ENCODE measurements at regions of chr19 and their contacts with region 1.

Region 1: GRCh38 chr19:662962-663681 is at the start of gene RNF126:
- DNase-seq: peak; percentile 87 to 97 (median 93)
- H3K4me3 ChIP-seq: peak within 1 kb of the TSS; percentile 86
- H3K27ac ChIP-seq: peak within 1 kb of the TSS; percentile 69 to 84
- H3K4me1 ChIP-seq: peaks cover 26% of the 10 kb centered on the region
- H3K27me3 ChIP-seq: no peaks in the 10 kb centered on the region
- CTCF ChIP-seq: no peak
- EP300 ChIP-seq: no peak
- POLR2A ChIP-seq: peak; percentile 41
- total RNA-seq, gene RNF126: 26.6 to 52.2 (median 34.5) TPM

Region 2: DNA sequence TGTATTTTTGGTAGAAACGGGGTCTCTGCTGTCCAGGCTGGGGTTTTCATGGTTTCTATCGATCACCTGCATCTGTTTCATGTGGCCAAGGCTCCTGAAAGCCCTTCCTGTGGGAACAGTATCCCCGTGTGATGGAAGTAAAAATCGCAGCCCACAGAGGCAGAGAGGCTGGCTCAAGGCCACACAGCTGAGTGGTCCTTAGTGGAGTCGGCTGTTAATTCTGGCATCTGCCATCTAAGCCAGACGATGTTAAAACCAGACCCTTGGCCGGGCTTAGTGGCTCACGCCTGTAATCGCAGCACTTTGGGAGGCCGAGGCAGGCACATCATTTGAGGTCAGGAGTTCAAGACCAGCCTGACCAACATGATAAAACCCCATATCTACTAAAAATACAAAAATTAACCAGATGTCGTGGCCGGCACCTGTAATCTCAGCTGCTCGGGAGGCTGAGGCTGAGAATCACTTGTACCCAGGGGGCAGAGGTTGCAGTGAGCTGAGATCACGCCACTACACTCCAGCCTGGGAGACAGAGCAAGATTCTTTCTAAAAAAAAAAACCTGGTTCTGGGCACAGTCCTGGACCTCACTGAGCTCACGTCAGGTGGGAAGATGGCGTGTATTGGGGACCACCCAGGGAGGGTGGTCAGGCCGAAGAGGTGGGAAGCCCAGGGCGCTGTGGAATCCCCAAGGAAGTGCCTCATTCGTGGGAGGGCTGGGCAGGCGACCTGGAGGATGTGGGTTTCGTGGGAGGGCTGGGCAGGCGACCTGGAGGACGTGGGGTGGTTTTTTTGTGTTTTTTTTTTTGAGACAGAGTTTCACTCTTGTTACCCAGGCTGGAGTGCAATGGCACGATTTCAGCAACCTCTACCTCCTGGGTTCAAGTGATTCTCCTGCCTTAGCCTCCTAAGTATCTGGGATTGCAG is 69.3 kb after region 1 on chr19:
- intact Hi-C with region 1: loop called (anchors 2 to 5 kb)
- DNase-seq: no peak
- H3K4me3 ChIP-seq: no peak overlapping the region
- H3K27ac ChIP-seq: no peak overlapping the region
- H3K4me1 ChIP-seq: no peaks in the 10 kb centered on the region
- H3K27me3 ChIP-seq: no peaks in the 10 kb centered on the region
- CTCF ChIP-seq: no peak
- EP300 ChIP-seq: no peak
- POLR2A ChIP-seq: no peak

Region 3: GRCh38 chr19:737581-738093 is 74.5 kb after region 1 on chr19:
- intact Hi-C with region 1: loop called (anchors 2 to 5 kb)
- DNase-seq: peak in 4 of 5 donors; percentile 34 to 74 (median 56)
- H3K4me3 ChIP-seq: no peak overlapping the region
- H3K27ac ChIP-seq: no peak overlapping the region
- H3K4me1 ChIP-seq: no peaks in the 10 kb centered on the region
- H3K27me3 ChIP-seq: no peaks in the 10 kb centered on the region
- CTCF ChIP-seq: peak in 1 of 3 donors; percentile 17
- EP300 ChIP-seq: no peak
- POLR2A ChIP-seq: no peak

Region 4: DNA sequence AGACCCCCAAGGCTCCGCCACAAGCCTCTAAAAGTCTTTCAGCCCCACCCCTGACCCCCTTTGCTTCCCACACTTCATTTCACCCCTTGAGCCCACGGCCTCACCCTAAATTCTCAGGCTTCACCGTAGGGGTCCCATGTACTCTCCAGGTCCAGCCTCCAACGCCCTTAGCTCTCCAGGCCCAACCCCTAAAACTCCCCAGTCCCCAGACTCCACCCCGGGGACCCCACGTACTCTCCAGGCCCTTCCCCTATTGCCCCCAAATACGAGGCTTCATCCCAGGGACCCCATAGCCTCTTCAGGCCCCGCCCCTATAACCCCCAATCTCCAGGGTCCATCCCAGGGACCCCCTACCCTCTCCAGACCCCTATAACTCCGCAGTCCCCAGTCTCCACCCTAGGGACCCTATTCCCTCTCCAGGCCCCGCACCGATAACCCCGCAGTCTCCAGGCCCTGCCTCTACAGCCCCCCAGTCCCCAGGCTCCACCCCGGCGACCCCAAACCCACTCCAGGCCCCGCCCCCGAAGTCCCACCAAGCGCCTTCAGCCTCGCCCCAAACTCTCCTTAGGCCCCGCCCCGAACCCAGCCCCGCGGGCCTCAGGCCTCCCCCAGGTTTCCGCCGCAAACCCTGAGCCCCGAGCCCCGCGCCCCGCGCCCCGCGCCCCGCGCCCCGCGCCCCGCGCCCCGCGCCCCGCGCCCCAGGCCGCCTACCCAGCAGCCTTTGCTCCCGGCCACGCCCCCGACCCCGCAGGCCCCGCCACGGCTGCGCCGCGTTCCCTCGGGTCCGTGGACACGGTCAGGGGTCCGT is 229.3 kb after region 1 on chr19:
- intact Hi-C with region 1: loop called in 1 of 4 experiments (anchors 10 kb)
- DNase-seq: peak in 2 of 5 donors; percentile 48 to 68
- H3K4me3 ChIP-seq: peak overlapping the region; percentile 93
- H3K27ac ChIP-seq: peak overlapping the region; percentile 84 to 87
- H3K4me1 ChIP-seq: peaks cover 5% of the 10 kb centered on the region
- H3K27me3 ChIP-seq: no peaks in the 10 kb centered on the region
- CTCF ChIP-seq: no peak
- EP300 ChIP-seq: no peak
- POLR2A ChIP-seq: no peak